OCI-LY7 (cell line): ENCODE measurements at regions of chr5 and their contacts with region 1.

Region 1: DNA sequence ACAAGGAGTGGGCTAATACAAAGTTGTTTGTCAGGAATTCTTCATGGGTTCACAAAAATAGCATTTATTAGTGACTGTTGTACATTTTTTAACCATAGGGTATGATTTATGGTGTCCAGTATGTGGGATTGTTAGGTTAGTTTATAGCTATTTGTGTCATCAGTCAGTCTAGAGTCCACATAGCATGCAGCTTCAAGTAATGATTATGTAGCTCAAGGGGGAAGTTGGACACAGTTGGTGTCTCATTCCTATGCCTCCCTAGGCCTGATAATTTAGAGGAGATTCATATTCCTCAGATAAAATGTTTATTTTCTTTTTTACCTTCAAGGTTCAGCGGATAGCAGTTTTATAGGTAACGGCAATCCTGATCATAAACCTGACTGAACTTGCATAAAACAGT is 153.8 kb downstream of the OXCT1 start:
- DNase-seq: no peak
- H3K4me3 ChIP-seq: no peak overlapping the region
- H3K27ac ChIP-seq: no peak overlapping the region
- H3K4me1 ChIP-seq: no peaks in the 10 kb centered on the region
- CTCF ChIP-seq: no peak

Region 2: DNA sequence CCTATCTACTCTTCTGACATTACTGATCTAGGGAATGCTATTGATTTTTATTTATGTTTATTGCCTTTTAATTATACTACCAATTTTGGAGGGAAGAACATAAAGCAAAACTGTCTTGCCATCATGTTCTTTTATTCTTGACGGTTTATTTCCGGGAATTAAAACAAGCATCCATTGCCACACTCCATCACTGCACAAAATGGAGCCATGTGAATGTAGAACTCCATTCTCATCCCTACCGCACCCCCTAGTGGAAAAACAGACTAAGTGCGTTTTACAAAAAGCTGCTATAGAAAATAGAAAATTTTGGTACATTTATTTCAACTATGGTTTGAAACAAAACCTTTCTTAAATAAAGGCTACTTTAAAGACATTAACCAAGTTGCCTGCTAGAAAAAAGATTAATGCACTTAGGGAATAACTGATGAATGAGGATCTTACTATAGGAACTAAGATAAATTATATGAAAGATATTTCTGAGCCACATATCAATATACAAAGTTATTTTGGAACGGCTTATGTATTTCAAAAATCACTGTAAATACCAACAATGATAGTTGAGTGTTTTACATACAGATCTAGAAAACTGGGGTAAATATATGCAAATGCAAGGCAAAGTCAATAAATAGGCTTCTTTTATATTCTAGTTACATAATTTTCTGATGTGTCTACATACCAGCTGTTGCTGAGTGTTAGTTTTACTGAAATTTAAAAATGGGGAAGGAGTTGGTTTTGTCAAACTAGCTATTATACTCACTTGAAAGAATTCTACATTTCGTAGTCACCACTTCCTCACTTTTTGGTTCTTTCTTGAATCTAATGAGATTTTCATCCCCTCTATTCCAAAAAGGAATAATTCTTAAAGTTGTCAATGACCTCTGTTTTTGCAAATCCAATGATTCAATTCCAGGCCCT is 127.3 kb after region 1 on chr5:
- CTCF ChIA-PET with region 1: no interaction called
- POLR2A ChIA-PET with region 1: no interaction called
- intact Hi-C with region 1: loop called (anchors 5 kb)
- DNase-seq: peak; percentile 67
- H3K4me3 ChIP-seq: no peak overlapping the region
- H3K27ac ChIP-seq: no peak overlapping the region
- H3K4me1 ChIP-seq: peaks cover 15% of the 10 kb centered on the region
- CTCF ChIP-seq: peak; percentile 97